Thyroid gland (tissue), 4 donors: ENCODE measurements at regions of chr6 and their contacts with region 1.

Region 1: DNA sequence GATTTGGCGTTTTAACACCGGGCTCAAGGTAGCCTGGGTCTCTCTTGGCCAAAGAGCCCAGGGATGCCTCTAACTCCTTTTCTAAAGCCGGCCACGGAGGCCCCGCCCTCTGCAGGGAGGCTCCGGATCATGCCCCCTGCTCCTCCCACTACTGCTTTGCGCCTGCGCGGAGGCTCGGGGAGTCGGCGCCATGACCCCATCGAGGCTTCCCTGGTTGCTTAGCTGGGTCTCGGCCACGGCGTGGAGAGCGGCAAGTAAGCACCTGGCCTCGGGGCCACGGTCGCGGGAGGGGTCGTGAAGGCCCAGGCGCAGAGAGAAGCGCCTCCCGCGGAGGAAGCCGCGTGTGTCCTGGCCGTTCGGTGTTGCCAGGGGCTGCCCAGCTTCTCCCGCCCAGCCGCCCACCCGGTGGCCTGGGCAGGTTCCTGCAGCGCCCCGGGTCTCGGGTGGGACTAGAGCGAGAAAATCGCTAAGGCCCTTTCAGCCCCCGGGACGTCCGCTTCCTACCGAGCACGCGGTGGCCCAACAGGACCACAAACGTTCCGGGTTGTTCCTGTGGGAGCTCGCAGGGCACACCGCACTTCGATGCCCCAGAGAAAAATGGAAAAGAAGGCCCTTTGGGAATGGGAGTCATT is at the start of gene SDHAF4:
- DNase-seq: peak; percentile 93 to 96
- H3K4me3 ChIP-seq: peak within 1 kb of the TSS; percentile 51 to 81 (median 80)
- H3K27ac ChIP-seq: peak within 1 kb of the TSS; percentile 78 to 83 (median 79)
- H3K4me1 ChIP-seq: peaks cover 0 to 4% of the 10 kb centered on the region in 2 donors
- H3K27me3 ChIP-seq: no peaks in the 10 kb centered on the region
- CTCF ChIP-seq: peak in 2 of 6 experiments; percentile 15 to 21
- POLR2A ChIP-seq: peak; percentile 67 to 88
- total RNA-seq, gene SDHAF4: 4.3 to 19.2 (median 9.9) TPM

Region 2: DNA sequence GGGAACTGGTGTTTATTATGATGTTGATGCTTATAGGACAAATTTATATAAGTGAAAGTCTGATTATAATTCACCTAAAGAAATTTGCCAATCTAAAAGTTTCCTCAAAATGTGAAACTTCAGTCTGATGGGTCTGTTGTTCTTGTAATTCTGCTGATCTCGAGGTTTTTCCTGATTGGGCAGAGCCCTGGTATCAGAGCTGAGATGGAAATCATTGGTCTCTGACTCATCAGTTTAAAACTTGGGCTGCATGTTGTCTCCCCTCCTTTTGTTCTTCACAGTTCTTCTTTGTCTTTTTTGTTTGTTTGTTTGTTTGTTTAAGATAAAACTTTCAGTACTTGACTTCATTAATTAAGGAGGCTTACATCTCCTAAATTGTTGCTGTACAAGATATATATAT is 106.7 kb after region 1 on chr6:
- intact Hi-C with region 1: loop called (anchors 10 kb)
- DNase-seq: no peak
- H3K4me3 ChIP-seq: no peak overlapping the region
- H3K27ac ChIP-seq: no peak overlapping the region
- H3K4me1 ChIP-seq: peaks cover 13 to 19% of the 10 kb centered on the region in 2 donors
- H3K27me3 ChIP-seq: no peaks in the 10 kb centered on the region
- CTCF ChIP-seq: no peak
- POLR2A ChIP-seq: no peak

Region 3: DNA sequence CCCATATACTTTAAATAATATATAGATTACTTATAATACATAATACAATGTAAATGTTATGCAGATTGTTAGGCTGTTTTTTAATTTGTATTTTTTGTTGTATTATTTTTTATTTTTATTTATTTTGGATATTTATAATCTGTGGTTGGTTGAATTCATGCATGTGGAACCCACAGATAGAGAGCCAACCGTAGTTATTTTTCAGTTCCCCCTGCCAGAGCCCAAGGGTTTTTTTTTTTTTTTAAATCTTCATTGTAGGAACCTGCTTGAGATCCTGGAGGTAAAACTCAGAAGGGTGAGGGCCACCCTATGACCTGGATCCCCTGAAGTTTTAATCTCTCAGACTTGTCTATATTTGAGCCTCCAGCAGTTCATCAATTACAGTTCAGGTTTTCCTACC is 256.8 kb after region 1 on chr6:
- intact Hi-C with region 1: no loop called
- DNase-seq: no peak
- H3K4me3 ChIP-seq: no peak overlapping the region
- H3K27ac ChIP-seq: no peak overlapping the region
- H3K4me1 ChIP-seq: no peaks in the 10 kb centered on the region
- H3K27me3 ChIP-seq: no peaks in the 10 kb centered on the region
- CTCF ChIP-seq: no peak
- POLR2A ChIP-seq: no peak